ENCODE measurements at regions of chr1 and their contacts with region 1.

Region 1: DNA sequence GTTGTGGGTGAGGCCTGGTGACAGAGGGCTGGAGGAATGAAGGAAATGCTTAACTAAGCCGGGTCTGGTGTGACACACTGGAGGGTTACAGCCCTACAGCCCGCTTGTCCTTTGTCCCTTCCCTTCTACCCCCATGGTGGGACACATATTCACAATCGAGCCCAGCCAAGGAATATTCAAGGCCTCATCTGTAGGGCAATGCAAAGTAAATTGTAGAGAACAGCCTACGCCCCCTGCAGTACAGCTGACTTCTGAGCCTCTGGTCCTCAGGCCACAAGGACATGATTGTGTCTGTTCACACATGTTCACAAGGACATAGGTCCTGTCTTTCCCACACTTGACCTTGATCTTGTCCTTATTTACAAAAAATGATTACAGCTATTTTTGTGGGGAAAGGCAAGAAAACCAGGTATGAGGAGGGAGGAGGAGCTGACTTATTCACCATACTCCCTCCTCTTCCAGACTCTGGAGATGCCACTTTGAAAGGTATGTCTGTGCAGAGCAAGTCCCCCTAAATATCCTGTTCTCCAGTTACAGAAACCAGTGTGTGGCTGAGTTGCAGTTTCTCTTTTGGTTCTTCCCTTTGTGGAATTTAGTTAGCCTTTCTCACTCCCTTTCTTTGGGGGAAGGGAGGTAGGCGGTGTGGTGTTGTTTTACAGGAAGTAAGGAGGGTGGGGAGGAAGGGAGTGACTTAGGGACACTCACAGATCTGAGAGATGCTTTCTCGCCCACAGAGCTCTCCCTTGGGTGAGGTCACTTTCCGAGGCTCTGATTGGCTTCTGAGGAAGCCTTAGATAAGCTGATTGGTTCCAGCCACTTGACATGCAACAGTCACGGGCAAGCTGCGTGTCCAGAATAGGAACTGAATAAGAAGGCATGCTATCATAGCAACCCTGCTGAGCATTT is 14.6 kb downstream of the POLR3GL start:
- DNase-seq: peak; percentile 89 to 90
- H3K4me3 ChIP-seq: no peak overlapping the region
- H3K4me1 ChIP-seq: peaks cover 18% of the 10 kb centered on the region
- H3K27me3 ChIP-seq: no peaks in the 10 kb centered on the region

Region 2: GRCh38 chr1:145927063-145927886 is 51.8 kb before region 1 on chr1 and contains the start of gene RBM8A:
- in situ Hi-C with region 1: no loop called
- DNase-seq: peak; percentile 96
- H3K4me3 ChIP-seq: peak within 1 kb of the TSS; percentile 78
- H3K4me1 ChIP-seq: peaks cover 11% of the 10 kb centered on the region
- H3K27me3 ChIP-seq: no peaks in the 10 kb centered on the region

Region 3: DNA sequence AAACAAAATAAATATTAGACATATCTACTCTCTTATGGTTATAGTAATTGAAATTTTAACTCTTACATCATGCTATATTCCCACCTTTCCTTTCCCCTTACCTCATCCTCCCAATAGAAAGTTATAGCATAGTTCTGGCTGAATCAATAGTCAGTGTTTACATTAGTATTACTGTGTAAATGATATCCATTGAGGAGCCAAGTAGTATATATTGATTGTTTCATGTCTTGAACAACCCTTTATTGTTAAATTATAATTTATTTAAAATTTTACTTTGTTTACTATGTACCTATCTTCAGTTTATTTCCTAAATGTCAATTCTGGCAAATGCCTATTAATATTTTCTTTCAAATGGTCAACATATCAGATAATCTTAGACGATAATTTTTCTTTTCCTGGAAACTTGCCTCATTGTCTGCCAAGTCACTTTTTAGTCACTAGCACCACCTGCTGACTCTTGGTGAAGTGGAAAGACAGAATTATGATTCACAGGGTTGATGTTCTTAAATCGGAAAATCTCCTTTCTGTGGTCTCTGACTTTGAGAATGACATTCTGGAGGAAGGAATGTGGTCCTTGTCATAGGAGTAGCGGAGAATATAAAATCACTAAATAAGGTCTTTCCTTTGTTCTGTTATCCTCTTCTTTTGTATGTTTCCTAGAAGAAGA is 33.8 kb after region 1 on chr1:
- in situ Hi-C with region 1: loop called (anchors 5 kb)
- DNase-seq: peak; percentile 57 to 75
- H3K4me3 ChIP-seq: no peak overlapping the region
- H3K4me1 ChIP-seq: no peaks in the 10 kb centered on the region
- H3K27me3 ChIP-seq: peaks cover 18% of the 10 kb centered on the region

Measured in HAP-1 (cell line).